Heart right ventricle (tissue), 16 donors: ENCODE measurements at regions of chr13 and their contacts with region 1.

Region 1: DNA sequence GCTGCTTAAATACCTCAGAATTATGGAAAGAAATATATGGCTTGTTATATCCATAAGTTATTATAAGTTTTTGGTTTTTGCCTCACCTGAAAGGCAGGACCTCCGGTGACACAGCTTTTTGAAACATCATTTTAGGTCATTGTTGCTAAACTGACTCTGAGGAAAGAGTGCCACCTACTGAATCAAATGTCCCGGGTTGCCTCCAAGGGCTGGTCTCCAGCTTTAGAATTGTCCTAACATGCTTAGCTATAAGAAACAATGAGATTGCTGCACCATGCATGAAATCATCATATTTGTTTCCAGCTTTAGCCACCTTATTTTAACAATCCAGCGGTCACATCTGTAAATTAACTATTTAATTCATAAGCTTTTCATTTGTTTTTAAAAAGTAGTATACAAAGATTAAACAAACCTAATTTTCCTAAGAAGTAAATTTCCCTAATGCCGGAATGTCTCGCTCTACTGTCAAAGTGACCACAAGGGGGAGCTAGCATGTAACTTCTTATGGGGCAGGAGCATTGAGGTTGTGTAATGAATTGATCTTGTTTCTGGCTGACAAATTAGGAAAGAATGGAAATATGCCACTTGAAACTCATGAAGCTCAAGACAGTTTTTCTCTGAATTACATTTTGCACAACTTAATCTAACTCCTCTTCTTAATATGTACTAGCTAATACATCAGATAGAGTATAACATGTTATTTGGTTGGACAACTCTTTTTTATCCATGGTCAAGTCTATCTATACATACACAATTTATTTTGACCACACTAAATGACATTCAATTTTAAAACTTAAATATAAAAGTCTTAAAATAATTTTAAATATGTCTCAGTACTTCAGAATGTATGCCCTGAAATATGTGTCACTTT is 6.7 kb upstream of the PCDH17 start:
- DNase-seq: peak in 1 of 2 donors; percentile 51
- ATAC-seq: peak in 1 of 8 donors; percentile 54
- H3K4me3 ChIP-seq: no peak overlapping the region
- H3K27ac ChIP-seq: no peak overlapping the region
- H3K4me1 ChIP-seq: peaks cover 0 to 7% (median 5%) of the 10 kb centered on the region in 9 donors
- H3K27me3 ChIP-seq: peaks cover 0 to 22% (median 0%) of the 10 kb centered on the region in 7 donors
- CTCF ChIP-seq: peak; percentile 65 to 89 (median 83)

Region 2: GRCh38 chr13:57857945-57858344 is 233.1 kb after region 1 on chr13:
- intact Hi-C with region 1: loop called in 8 of 10 experiments (anchors 2 to 10 kb)
- DNase-seq: no peak
- ATAC-seq: no peak
- H3K4me3 ChIP-seq: no peak overlapping the region
- H3K27ac ChIP-seq: no peak overlapping the region
- H3K4me1 ChIP-seq: no peaks in the 10 kb centered on the region
- H3K27me3 ChIP-seq: no peaks in the 10 kb centered on the region
- CTCF ChIP-seq: peak in 5 of 9 donors; percentile 6 to 49 (median 43)

Region 3: GRCh38 chr13:59261928-59262488 is 1637.2 kb after region 1 on chr13:
- intact Hi-C with region 1: loop called in 1 of 10 experiments (anchors 5 kb)
- DNase-seq: no peak
- ATAC-seq: no peak
- H3K4me3 ChIP-seq: no peak overlapping the region
- H3K27ac ChIP-seq: no peak overlapping the region
- H3K4me1 ChIP-seq: peaks cover 0 to 6% (median 0%) of the 10 kb centered on the region in 9 donors
- H3K27me3 ChIP-seq: no peaks in the 10 kb centered on the region
- CTCF ChIP-seq: peak in 7 of 9 donors; percentile 35 to 53 (median 48)

Region 4: GRCh38 chr13:59318320-59318930 is 1693.6 kb after region 1 on chr13:
- intact Hi-C with region 1: loop called in 1 of 10 experiments (anchors 10 kb)
- DNase-seq: peak; percentile 67 to 83
- ATAC-seq: peak in 6 of 8 donors; percentile 23 to 82 (median 64)
- H3K4me3 ChIP-seq: no peak overlapping the region
- H3K27ac ChIP-seq: peak overlapping the region in 4 of 10 donors; percentile 12 to 68 (median 50)
- H3K4me1 ChIP-seq: peaks cover 0 to 24% (median 5%) of the 10 kb centered on the region in 9 donors
- H3K27me3 ChIP-seq: no peaks in the 10 kb centered on the region
- CTCF ChIP-seq: peak; percentile 60 to 88 (median 79)